ENCODE measurements at regions of chr5 and their contacts with region 1.

Region 1: GRCh38 chr5:57221049-57221568 is 47.2 kb downstream of the GPBP1 start:
- DNase-seq: peak; percentile 37
- H3K4me3 ChIP-seq: no peak overlapping the region
- H3K27ac ChIP-seq: no peak overlapping the region
- H3K4me1 ChIP-seq: peaks cover 5% of the 10 kb centered on the region
- H3K27me3 ChIP-seq: no peaks in the 10 kb centered on the region
- CTCF ChIP-seq: peak; percentile 70 to 76

Region 2: GRCh38 chr5:56900858-56901578 is 320.1 kb before region 1 on chr5:
- CTCF ChIA-PET with region 1: no interaction called
- dilution Hi-C with region 1: no loop called
- in situ Hi-C with region 1: loop called in 1 of 2 experiments (anchors 5 kb)
- intact Hi-C with region 1: loop called (anchors 1 kb)
- DNase-seq: peak; percentile 39
- H3K4me3 ChIP-seq: no peak overlapping the region
- H3K27ac ChIP-seq: no peak overlapping the region
- H3K4me1 ChIP-seq: peaks cover 8% of the 10 kb centered on the region
- H3K27me3 ChIP-seq: no peaks in the 10 kb centered on the region
- CTCF ChIP-seq: peak; percentile 62 to 79

Region 3: DNA sequence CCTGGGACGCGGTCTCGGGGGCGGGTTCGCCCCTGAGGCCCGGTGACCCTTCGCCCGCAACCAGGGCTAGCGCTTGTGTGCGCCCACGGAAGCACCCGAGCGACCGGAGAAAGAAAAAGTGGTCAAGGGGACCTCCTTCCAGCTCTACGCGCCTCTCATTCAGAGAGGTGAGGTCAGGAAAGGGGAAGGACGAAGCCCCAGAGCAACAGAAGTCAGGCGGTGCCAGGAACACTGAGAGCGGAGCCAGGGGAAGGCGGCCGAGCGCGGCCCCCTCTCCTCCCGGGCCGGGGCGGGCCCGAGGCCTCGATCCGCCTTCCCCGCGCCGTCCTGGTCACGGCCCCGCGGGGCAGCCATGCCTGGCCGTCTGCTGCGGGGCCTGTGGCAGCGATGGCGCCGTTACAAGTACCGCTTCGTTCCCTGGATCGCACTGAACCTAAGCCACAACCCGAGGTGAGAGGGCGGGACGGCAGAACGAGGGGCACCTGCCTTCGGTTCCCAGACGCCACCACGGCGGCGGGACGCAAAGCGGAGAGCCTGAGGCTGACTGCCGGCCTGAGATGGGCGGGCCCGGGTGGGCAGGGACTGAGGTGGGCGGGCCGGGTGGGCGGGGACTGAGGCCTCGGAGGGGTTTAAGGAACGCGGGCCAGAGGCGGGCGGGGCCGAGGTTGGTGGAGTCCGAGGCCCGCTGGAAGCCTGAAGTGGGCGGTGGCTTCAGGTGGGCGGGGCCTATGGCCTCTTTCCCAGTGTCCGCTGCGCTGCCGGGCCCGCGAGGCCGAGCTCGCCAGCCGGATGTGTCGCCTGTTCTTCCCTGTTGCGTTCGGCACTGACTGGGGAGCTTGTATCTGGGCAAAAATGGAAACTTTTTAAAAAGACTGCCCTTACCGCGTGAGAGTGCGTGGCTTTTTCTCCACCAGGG is 311.6 kb before region 1 on chr5 and contains the start of gene SETD9:
- CTCF ChIA-PET with region 1: no interaction called
- dilution Hi-C with region 1: no loop called
- in situ Hi-C with region 1: loop called in 1 of 2 experiments (anchors 5 kb)
- intact Hi-C with region 1: loop called (anchors 2 kb)
- DNase-seq: peak; percentile 95
- H3K4me3 ChIP-seq: peak within 1 kb of the TSS; percentile 69 to 97 (median 79)
- H3K27ac ChIP-seq: peak within 1 kb of the TSS; percentile 92
- H3K4me1 ChIP-seq: peaks cover 5% of the 10 kb centered on the region
- H3K27me3 ChIP-seq: no peaks in the 10 kb centered on the region
- CTCF ChIP-seq: no peak
- total RNA-seq, gene SETD9: 10.5 to 10.7 TPM

Region 4: GRCh38 chr5:56951946-56952691 is 269.0 kb before region 1 on chr5 and contains the start of gene MIER3:
- CTCF ChIA-PET with region 1: no interaction called
- dilution Hi-C with region 1: no loop called
- in situ Hi-C with region 1: no loop called
- intact Hi-C with region 1: loop called (anchors 5 kb)
- DNase-seq: peak; percentile 68
- H3K4me3 ChIP-seq: peak within 1 kb of the TSS; percentile 79 to 92 (median 80)
- H3K27ac ChIP-seq: peak within 1 kb of the TSS; percentile 36
- H3K4me1 ChIP-seq: peaks cover 14% of the 10 kb centered on the region
- H3K27me3 ChIP-seq: no peaks in the 10 kb centered on the region
- CTCF ChIP-seq: no peak
- total RNA-seq, gene MIER3: 17.6 to 18.7 TPM

Region 5: DNA sequence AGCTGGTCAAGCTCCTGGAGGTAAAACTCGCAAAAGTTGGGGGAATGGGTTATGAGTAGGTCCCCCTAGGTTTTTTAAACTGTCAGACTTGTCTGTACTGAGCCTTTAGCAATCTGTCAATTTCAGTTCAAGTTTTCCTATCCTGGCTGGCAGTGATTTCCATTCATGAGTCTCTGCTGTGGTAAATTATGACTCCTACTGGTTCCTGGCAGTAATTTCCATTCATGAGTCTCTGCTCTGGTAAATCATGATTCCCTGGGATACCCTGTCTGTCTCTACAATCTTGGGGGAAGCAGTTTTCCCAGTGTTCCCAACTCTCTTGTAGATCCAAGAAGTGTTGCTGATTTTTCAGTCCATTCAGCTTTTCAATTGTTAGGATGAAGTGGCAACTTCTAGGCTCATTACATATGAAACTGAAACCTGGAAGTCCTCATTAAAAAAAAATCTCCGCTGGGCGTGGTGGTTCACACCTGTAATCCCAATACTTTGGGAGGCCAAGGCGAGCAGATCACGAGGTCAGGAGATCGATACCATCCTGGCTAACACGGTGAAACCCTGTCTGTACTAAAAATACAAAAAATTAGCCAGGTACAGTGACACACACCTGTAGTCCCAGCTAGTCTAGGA is 138.6 kb before region 1 on chr5:
- CTCF ChIA-PET with region 1: no interaction called
- dilution Hi-C with region 1: no loop called
- in situ Hi-C with region 1: no loop called
- intact Hi-C with region 1: loop called (anchors 2 kb)
- DNase-seq: peak; percentile 35
- H3K4me3 ChIP-seq: no peak overlapping the region
- H3K27ac ChIP-seq: no peak overlapping the region
- H3K4me1 ChIP-seq: no peaks in the 10 kb centered on the region
- H3K27me3 ChIP-seq: no peaks in the 10 kb centered on the region
- CTCF ChIP-seq: peak; percentile 20 to 67

Region 6: GRCh38 chr5:57137401-57137800 is 83.7 kb before region 1 on chr5:
- CTCF ChIA-PET with region 1: no interaction called
- dilution Hi-C with region 1: no loop called
- in situ Hi-C with region 1: no loop called
- intact Hi-C with region 1: loop called (anchors 1 kb)
- DNase-seq: peak; percentile 58
- H3K4me3 ChIP-seq: no peak overlapping the region
- H3K27ac ChIP-seq: no peak overlapping the region
- H3K4me1 ChIP-seq: no peaks in the 10 kb centered on the region
- H3K27me3 ChIP-seq: no peaks in the 10 kb centered on the region
- CTCF ChIP-seq: no peak

Region 7: DNA sequence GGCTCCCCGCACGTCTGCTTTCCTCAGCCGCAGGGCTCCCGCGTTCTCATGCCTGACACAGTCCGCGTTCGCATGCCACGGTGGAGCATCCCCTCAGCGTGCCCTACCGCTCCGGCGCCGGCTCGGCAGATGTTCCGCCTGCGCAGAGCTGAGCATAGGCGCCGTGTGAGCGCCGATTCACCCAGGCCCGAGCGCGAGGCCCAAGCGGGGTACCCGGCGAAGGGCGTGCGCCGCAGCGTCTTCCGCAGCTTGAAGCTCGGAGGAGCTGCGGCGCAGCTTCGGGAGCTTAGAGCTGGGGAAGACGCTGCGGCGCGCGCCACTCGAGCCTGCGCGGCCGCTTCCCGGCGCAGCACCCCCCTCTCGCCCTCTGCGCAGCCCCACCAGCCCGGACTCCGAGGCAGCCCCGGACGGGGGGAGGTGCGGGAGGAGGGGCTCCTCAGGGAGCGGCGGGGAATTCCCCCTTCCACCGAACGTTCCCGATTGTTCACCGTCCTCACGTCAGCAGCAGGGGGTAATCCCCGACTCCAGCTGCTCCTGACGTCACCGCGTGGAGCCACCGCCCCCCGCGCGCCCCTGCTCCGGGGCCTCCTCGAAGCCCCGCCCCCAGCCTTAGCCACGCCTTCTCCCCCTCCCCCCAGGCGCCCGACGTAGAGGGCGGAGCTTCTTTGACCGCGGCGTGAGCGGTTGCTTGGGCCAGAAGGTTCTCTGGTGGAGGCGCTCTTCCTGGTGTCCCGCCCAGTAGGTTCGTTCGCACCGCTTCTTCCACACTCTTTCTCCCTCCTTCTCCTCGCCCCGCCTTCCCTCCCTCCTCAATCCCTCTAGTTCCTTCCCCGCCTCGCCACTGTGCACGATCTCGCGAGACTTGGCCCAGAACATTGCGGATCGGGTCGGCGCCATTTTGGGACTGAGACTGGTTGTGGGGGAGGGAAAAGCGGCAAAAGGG is 47.7 kb before region 1 on chr5 and contains the start of gene GPBP1:
- CTCF ChIA-PET with region 1: no interaction called
- dilution Hi-C with region 1: no loop called
- in situ Hi-C with region 1: no loop called
- intact Hi-C with region 1: loop called (anchors 2 kb)
- DNase-seq: peak; percentile 99
- H3K4me3 ChIP-seq: peak within 1 kb of the TSS; percentile 94 to 98 (median 96)
- H3K27ac ChIP-seq: peak within 1 kb of the TSS; percentile 99
- H3K4me1 ChIP-seq: peaks cover 23% of the 10 kb centered on the region
- H3K27me3 ChIP-seq: no peaks in the 10 kb centered on the region
- CTCF ChIP-seq: no peak
- total RNA-seq, gene GPBP1: 39.7 to 55.6 TPM

Measured in mammary epithelial cell (primary cell).